ENCODE measurements at regions of chr21 and their contacts with region 1.

Region 1: DNA sequence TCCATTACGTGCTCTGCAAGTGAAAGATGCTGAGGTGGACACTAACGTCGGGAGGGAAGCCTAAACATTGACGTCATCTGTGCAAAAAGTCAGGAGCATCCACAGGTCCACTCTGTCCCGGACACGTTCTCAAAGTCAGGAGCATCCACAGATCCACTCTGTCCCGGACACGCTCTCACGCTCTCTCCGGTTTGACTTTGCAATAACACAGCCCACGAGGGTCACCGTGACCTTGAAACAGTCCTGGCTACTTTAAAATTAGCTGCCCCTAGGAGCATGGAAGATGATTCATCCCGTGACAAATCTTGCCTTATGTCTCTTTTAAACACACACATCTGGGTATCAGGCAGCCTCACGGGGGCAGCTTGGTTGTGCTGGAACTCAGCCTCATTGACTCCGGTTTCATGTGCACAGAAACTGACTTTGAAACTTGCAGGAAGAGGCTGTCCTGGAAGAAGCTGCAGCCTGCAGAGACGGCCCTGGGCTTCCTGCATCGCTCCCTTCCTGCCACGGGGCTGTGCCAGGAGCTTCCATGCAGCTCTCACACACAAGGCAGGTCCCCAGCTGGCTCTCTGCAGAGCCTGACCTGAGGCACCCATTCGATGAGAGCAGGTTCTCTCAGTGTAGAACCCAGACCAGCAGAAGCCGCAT is 18.1 kb upstream of the COL18A1 start:
- DNase-seq: peak in 2 of 4 experiments; percentile 46 to 53
- ATAC-seq: peak; percentile 20
- H3K4me3 ChIP-seq: no peak overlapping the region
- H3K27ac ChIP-seq: no peak overlapping the region
- H3K4me1 ChIP-seq: peaks cover 6 to 55% of the 10 kb centered on the region in 2 experiments; a peak in 4 of 5 replicates
- H3K27me3 ChIP-seq: peaks cover 75 to 93% of the 10 kb centered on the region in 2 experiments
- CTCF ChIP-seq: peak; percentile 10 to 46 (median 34); a peak in 3 of 6 replicates
- EP300 ChIP-seq: no peak
- POLR2A ChIP-seq: no peak
- RAD21 ChIP-seq: peak; percentile 33 to 52

Region 2: GRCh38 chr21:44927587-44928461 is 459.0 kb before region 1 on chr21:
- CTCF ChIA-PET with region 1: no interaction called
- POLR2A ChIA-PET with region 1: no interaction called
- in situ Hi-C with region 1: no loop called
- intact Hi-C with region 1: no loop called
- DNase-seq: peak; percentile 58 to 72 (median 63)
- ATAC-seq: peak; percentile 31; the same call in 2 of the 3 replicates
- H3K4me3 ChIP-seq: no peak overlapping the region
- H3K27ac ChIP-seq: no peak overlapping the region
- H3K4me1 ChIP-seq: peaks cover 8 to 34% of the 10 kb centered on the region in 2 experiments; a peak in 4 of 5 replicates
- H3K27me3 ChIP-seq: peaks cover 31 to 53% of the 10 kb centered on the region in 2 experiments
- CTCF ChIP-seq: no peak
- EP300 ChIP-seq: no peak
- POLR2A ChIP-seq: no peak
- RAD21 ChIP-seq: no peak

Region 3: GRCh38 chr21:45372732-45373355 is 14.0 kb before region 1 on chr21:
- CTCF ChIA-PET with region 1: no interaction called
- POLR2A ChIA-PET with region 1: interaction called, 10 read pairs
- in situ Hi-C with region 1: no loop called
- intact Hi-C with region 1: no loop called
- DNase-seq: no peak
- ATAC-seq: no peak
- H3K4me3 ChIP-seq: no peak overlapping the region
- H3K27ac ChIP-seq: no peak overlapping the region
- H3K4me1 ChIP-seq: peaks cover 6 to 24% of the 10 kb centered on the region in 2 experiments; a peak in 4 of 5 replicates
- H3K27me3 ChIP-seq: peaks cover 7 to 16% of the 10 kb centered on the region in 2 experiments; a peak in 3 of 5 replicates
- CTCF ChIP-seq: no peak
- EP300 ChIP-seq: no peak
- POLR2A ChIP-seq: no peak
- RAD21 ChIP-seq: no peak

Region 4: DNA sequence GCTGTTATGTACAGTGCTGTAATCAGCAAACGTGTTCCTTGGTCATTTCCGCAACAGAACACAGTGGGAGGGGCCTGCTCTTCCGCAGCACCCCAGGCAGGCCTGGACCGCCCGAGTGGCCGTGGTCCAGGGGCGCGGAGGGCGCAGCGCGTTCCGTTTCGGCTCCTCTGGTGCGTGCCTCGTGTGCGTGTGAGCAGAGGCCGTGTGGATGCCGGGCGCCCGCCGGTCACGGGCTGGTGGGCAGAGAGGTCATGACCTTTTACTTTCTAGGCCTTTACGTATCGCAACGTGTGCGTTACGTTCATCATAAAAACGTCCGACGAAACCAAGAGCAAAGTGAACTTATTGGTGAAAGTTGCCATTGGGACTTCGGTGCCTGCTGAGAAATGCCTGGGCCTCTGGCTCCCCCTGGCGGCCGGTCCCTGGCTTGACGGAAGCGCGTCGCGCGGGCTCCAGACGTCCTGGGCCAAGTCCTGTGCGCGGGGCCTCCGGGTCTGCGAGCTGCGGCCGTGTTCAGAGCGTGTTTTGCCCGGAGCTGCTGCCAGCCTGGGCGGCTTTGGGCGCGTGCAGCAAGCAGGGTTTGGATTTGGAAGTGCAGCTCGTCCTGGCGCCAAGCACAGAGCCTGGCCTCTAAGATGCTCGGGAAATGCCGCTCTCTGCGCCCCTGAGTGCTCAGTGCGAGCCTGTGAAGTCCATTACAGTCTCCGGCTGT is 52.5 kb after region 1 on chr21:
- CTCF ChIA-PET with region 1: interaction called, 3 read pairs
- POLR2A ChIA-PET with region 1: no interaction called
- in situ Hi-C with region 1: no loop called
- intact Hi-C with region 1: loop called (anchors 2 kb)
- DNase-seq: peak; percentile 90 to 91 (median 90)
- ATAC-seq: peak; percentile 98
- H3K4me3 ChIP-seq: no peak overlapping the region
- H3K27ac ChIP-seq: peak overlapping the region; percentile 55; the same call in 2 of the 3 replicates
- H3K4me1 ChIP-seq: peaks cover 10 to 61% of the 10 kb centered on the region in 2 experiments; a peak in 4 of 5 replicates
- H3K27me3 ChIP-seq: peaks cover 0 to 7% of the 10 kb centered on the region in 2 experiments; a peak in 2 of 5 replicates
- CTCF ChIP-seq: peak; percentile 97 to 98 (median 98)
- EP300 ChIP-seq: no peak
- POLR2A ChIP-seq: no peak
- RAD21 ChIP-seq: peak; percentile 100

Region 5: GRCh38 chr21:46585191-46585953 is 1198.5 kb after region 1 on chr21:
- CTCF ChIA-PET with region 1: no interaction called
- POLR2A ChIA-PET with region 1: no interaction called
- in situ Hi-C with region 1: no loop called
- intact Hi-C with region 1: no loop called
- DNase-seq: no peak
- ATAC-seq: no peak
- H3K4me3 ChIP-seq: no peak overlapping the region
- H3K27ac ChIP-seq: no peak overlapping the region
- H3K4me1 ChIP-seq: no peaks in the 10 kb centered on the region
- H3K27me3 ChIP-seq: no peaks in the 10 kb centered on the region
- CTCF ChIP-seq: no peak
- EP300 ChIP-seq: no peak
- POLR2A ChIP-seq: no peak
- RAD21 ChIP-seq: no peak